T-cell (primary cell): ENCODE measurements at regions of chr7 and their contacts with region 1.

Region 1: GRCh38 chr7:50317221-50317678 is 12.7 kb downstream of the IKZF1 start:
- DNase-seq: peak in 30 of 35 experiments; percentile 44 to 90 (median 66)
- ATAC-seq: peak; percentile 67 to 79 (median 69)
- H3K4me3 ChIP-seq: peak overlapping the region in 1 of 2 donors; percentile 35
- H3K4me3 Mint-ChIP-seq: peak overlapping the region; percentile 81 to 98 (median 95)
- H3K27ac ChIP-seq: peak overlapping the region; percentile 87
- H3K27ac Mint-ChIP-seq: peak overlapping the region in 1 of 2 donors; percentile 100
- H3K4me1 ChIP-seq: peaks cover 67 to 84% of the 10 kb centered on the region in 2 experiments
- H3K4me1 Mint-ChIP-seq: peaks cover 97% of the 10 kb centered on the region in 3 donors
- H3K27me3 ChIP-seq: no peaks in the 10 kb centered on the region
- H3K27me3 Mint-ChIP-seq: no peaks in the 10 kb centered on the region

Region 2: DNA sequence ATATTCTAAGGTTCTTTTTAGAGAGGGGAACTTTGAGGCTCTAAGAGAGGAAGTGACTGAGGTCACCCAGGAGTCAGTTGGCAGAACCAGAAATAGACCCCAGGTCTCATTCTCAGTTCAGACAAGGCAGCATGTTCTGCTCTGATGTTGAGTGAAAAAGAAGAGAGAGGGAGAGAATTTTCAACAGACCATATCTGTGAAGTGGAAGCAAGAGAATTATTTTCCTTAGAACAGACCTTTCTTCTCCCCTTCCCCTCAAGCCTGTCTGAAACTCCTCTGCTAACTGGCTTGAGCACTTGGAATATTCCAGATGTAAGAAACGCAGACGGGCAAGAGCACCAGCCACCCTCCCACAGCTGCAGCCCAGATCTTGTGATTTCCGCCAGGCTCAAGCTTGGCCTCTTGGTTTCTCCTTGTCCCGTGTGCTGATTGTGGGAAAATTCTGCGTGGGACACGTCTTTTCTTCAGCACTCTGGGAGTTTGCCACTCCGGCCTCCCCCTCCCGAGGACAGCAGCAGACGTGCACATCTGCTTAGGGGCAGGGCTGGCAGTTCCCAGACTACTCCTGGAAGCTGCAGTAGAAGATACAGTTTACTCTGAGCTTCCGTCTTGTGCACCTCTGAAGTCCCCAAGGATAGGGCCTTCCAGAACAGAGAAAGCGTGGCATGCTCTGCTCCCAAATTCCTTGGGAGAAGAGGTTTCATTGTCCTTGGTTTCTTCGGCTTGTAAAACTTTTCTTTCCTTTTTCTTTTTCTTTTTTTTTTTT is 35.4 kb before region 1 on chr7:
- CTCF ChIA-PET with region 1: no interaction called
- POLR2A ChIA-PET with region 1: interaction called in 1 of 2 experiments, 10 read pairs
- DNase-seq: peak in 1 of 35 experiments; percentile 42
- ATAC-seq: peak; percentile 66 to 91 (median 82)
- H3K4me3 ChIP-seq: peak overlapping the region in 1 of 2 donors; percentile 52
- H3K4me3 Mint-ChIP-seq: peak overlapping the region; percentile 53 to 74 (median 58)
- H3K27ac ChIP-seq: peak overlapping the region; percentile 56
- H3K27ac Mint-ChIP-seq: peak overlapping the region; percentile 88 to 97
- H3K4me1 ChIP-seq: peaks cover 20 to 43% of the 10 kb centered on the region in 2 experiments
- H3K4me1 Mint-ChIP-seq: peaks cover 53 to 60% (median 54%) of the 10 kb centered on the region in 3 donors
- H3K27me3 ChIP-seq: no peaks in the 10 kb centered on the region
- H3K27me3 Mint-ChIP-seq: no peaks in the 10 kb centered on the region

Region 3: DNA sequence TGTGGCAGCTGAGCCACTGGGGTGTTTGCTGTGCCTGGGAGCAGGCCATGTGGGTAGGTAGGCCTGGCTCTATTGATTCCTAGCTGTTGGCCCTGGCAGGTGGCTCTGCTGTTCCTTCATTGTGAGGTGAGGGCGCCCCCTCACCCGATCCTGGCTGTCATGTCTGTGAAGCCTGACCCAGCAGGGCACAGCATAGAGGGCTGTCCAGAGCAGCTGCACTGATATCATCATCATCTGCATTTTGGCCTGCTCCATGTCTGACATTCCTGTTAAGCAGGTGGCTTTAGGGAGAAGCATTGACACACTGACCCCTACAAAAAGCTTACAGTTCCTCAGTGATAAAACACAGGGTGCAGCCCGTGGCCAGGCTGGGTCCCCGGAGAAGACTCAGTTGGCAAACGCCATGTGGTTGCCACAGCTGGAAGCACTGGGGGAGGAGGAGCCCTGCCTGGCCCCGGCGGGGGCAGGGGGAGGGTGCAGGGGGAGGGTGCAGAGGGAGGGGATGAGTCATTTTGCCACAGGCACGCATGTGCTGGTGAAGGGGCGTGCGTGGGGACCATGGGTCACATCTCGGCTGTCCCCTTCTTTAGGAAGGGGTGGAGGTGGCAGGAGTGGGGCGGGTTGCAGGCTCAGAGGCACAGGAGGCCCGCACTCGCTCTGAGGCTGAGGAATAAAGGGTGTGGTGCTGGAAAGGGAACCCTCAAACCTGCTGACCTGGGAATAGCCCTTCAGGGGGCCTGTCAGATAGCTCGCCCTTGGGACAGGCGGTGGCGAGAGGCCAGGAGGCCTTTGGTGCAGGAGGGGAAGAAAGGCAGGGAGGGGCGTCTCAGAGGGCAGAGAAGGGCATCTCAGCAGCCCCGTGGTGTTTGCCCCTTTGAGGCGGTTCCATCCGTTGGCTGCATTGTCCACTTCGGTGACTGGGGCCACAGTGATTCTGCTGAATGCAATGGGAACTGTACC is 18.8 kb after region 1 on chr7:
- CTCF ChIA-PET with region 1: interaction called, 6 to 22 read pairs
- POLR2A ChIA-PET with region 1: interaction called, 5 to 15 read pairs
- DNase-seq: peak in 34 of 35 experiments; percentile 60 to 84 (median 73)
- ATAC-seq: peak; percentile 28 to 63 (median 58)
- H3K4me3 ChIP-seq: peak overlapping the region; percentile 16 to 45
- H3K4me3 Mint-ChIP-seq: no peak overlapping the region
- H3K27ac ChIP-seq: peak overlapping the region; percentile 88
- H3K27ac Mint-ChIP-seq: no peak overlapping the region
- H3K4me1 ChIP-seq: peaks cover 90 to 97% of the 10 kb centered on the region in 2 experiments
- H3K4me1 Mint-ChIP-seq: peaks cover 0 to 45% (median 0%) of the 10 kb centered on the region in 3 donors
- H3K27me3 ChIP-seq: no peaks in the 10 kb centered on the region
- H3K27me3 Mint-ChIP-seq: no peaks in the 10 kb centered on the region

Region 4: DNA sequence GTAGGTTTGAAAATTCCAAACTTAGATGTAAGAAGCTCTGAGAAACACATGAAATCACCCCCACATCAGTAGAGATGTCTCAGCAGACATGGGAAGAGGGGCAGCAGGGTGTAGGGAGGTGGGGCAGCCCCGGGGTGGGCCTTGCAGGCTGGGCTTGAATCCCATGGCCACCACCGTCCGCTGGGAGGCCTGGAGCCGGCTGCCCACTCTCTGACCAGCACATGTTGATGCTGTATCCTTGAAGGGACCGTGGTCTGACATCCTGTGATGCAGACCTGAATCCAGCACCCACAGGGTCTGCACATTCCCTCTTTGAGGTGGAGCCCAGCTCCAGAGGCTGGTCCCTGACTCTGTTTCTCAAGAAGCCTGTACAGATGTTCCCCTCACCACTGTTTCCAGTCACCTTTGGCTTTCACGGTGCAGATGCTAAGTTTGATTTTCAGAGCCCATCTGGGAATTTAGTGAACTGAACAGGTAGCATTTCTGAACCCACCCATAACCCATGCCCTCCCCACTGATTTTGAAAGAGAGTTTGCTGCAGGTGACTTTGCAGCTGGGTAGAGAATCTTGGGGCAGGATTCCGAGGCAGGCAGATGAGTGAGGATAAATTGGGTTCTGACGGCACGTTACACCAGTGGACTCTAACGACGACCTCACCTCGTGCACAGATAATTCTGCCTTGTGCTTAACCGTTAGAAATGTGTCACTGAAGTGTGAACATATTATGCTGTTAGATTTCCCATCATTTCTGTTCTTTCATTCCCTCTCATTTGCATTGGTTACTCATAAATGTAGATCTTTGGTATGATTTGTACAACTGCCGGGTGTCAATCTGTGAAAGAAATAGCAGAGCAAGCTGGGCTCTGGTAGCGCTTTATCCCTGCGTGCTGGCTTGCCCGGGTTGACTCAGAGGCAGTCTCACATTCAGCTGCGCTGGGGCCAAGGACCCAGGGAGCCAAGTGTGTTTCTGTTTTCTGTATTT is 33.0 kb after region 1 on chr7:
- CTCF ChIA-PET with region 1: interaction called, 3 to 16 read pairs
- POLR2A ChIA-PET with region 1: interaction called, 7 to 14 read pairs
- DNase-seq: peak in 32 of 35 experiments; percentile 43 to 76 (median 60)
- ATAC-seq: peak; percentile 48 to 71 (median 70)
- H3K4me3 ChIP-seq: peak overlapping the region; percentile 11 to 20
- H3K4me3 Mint-ChIP-seq: peak overlapping the region; percentile 51 to 74 (median 67)
- H3K27ac ChIP-seq: peak overlapping the region; percentile 96
- H3K27ac Mint-ChIP-seq: peak overlapping the region; percentile 95 to 96
- H3K4me1 ChIP-seq: peaks cover 91% of the 10 kb centered on the region in 2 experiments
- H3K4me1 Mint-ChIP-seq: peaks cover 98 to 100% (median 99%) of the 10 kb centered on the region in 3 donors
- H3K27me3 ChIP-seq: no peaks in the 10 kb centered on the region
- H3K27me3 Mint-ChIP-seq: no peaks in the 10 kb centered on the region

Region 5: DNA sequence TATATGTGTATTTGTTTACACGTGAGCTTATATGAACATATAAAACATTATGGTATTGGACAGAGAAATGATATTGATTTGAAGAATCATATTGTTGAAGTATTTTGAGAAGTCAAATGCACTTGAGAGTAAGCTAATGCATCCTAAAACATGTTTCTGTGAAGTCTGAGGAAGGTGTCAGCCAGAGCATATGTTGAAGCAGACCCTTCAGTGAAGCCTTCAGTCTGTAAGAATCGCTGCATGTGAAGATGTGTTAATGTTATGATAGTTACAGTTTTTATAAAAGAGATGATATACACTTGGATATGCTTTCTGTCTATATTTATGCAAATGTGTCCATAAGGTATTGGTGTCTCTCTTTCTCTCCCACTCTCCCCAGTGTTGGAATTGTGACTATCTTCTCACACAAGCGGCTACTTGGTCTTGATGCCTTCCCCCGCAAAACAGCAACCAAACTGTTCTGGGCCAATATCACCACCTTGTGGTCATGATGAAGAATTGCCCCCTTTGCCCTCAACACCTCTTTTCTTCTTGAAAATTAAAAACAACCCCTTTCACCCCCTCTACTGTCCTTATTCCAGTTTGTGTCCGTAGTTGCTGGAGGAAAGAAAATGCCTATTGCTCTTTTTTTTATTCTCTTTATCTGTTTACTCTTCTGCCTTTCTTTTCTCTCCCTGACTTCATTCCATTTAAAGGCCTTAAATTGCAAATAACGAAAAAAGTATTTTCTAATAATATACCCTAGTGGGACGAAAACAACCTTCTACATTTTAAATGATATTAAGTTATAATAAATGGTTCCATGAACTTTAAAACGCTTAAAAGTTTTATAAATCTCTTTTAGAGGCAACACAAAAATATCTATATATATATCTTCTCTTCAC is 52.1 kb after region 1 on chr7:
- CTCF ChIA-PET with region 1: interaction called, 6 to 72 read pairs
- POLR2A ChIA-PET with region 1: interaction called, 4 to 6 read pairs
- DNase-seq: peak in 25 of 35 experiments; percentile 32 to 92 (median 53)
- ATAC-seq: peak; percentile 48 to 64 (median 51)
- H3K4me3 ChIP-seq: no peak overlapping the region
- H3K4me3 Mint-ChIP-seq: peak overlapping the region in 2 of 3 donors; percentile 4 to 49
- H3K27ac ChIP-seq: peak overlapping the region; percentile 96
- H3K27ac Mint-ChIP-seq: peak overlapping the region; percentile 89 to 99
- H3K4me1 ChIP-seq: peaks cover 69 to 80% of the 10 kb centered on the region in 2 experiments
- H3K4me1 Mint-ChIP-seq: peaks cover 98 to 99% (median 98%) of the 10 kb centered on the region in 3 donors
- H3K27me3 ChIP-seq: no peaks in the 10 kb centered on the region
- H3K27me3 Mint-ChIP-seq: no peaks in the 10 kb centered on the region

Region 6: DNA sequence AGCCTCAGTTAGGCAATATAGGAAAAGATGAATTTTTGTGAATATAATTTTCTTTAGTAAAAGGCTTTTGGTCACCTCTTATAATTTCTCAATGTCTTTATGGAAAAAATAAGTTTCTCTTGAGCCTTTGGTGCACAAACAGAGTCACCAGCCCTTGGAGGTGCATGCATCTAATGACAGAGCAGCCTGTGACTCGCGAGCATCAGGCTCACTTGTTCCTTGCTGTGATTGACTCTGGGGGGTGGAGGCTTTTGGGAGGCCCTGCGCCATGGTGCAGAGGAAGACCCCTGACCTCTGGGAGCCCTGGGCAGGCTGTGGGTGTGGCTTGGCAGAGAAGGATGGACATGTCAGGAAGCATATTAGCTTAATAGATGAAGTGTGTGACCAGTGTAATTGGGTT is 72.7 kb after region 1 on chr7:
- CTCF ChIA-PET with region 1: no interaction called
- POLR2A ChIA-PET with region 1: no interaction called
- DNase-seq: no peak
- ATAC-seq: no peak
- H3K4me3 ChIP-seq: no peak overlapping the region
- H3K4me3 Mint-ChIP-seq: peak overlapping the region; percentile 7 to 27 (median 22)
- H3K27ac ChIP-seq: peak overlapping the region; percentile 38
- H3K27ac Mint-ChIP-seq: peak overlapping the region; percentile 98 to 100
- H3K4me1 ChIP-seq: peaks cover 45 to 67% of the 10 kb centered on the region in 2 experiments
- H3K4me1 Mint-ChIP-seq: peaks cover 82 to 94% (median 91%) of the 10 kb centered on the region in 3 donors
- H3K27me3 ChIP-seq: no peaks in the 10 kb centered on the region
- H3K27me3 Mint-ChIP-seq: no peaks in the 10 kb centered on the region